ENCODE measurements at regions of chr21 and their contacts with region 1.

Region 1: GRCh38 chr21:33360881-33361602 is 36.3 kb downstream of the IFNAR1 start:
- DNase-seq: no peak
- ATAC-seq: peak; percentile 98
- H3K4me3 ChIP-seq: no peak overlapping the region
- H3K27ac ChIP-seq: no peak overlapping the region
- H3K4me1 ChIP-seq: peaks cover 10 to 15% of the 10 kb centered on the region in 2 experiments
- H3K27me3 ChIP-seq: no peaks in the 10 kb centered on the region
- CTCF ChIP-seq: peak in 2 of 3 experiments; percentile 91 to 95; a peak in 5 of 6 replicates
- POLR2A ChIP-seq: no peak
- RAD21 ChIP-seq: peak; percentile 46

Region 2: GRCh38 chr21:33324291-33325221 is 36.5 kb before region 1 on chr21 and contains the start of gene IFNAR1:
- CTCF ChIA-PET with region 1: interaction called, 17 read pairs
- POLR2A ChIA-PET with region 1: no interaction called
- RAD21 ChIA-PET with region 1: interaction called in 1 of 2 experiments, 5 read pairs
- intact Hi-C with region 1: no loop called
- DNase-seq: peak; percentile 94
- ATAC-seq: peak; percentile 95
- H3K4me3 ChIP-seq: peak within 1 kb of the TSS; percentile 92 to 98
- H3K27ac ChIP-seq: peak within 1 kb of the TSS; percentile 84
- H3K4me1 ChIP-seq: peaks cover 0 to 13% of the 10 kb centered on the region in 2 experiments; a peak in 1 of 4 replicates
- H3K27me3 ChIP-seq: no peaks in the 10 kb centered on the region
- CTCF ChIP-seq: no peak
- POLR2A ChIP-seq: peak; percentile 95
- RAD21 ChIP-seq: no peak
- total RNA-seq, gene IFNAR1: 20.5 TPM

Region 3: GRCh38 chr21:33348706-33349105 is 12.3 kb before region 1 on chr21:
- CTCF ChIA-PET with region 1: interaction called, 12 read pairs
- POLR2A ChIA-PET with region 1: no interaction called
- RAD21 ChIA-PET with region 1: no interaction called
- intact Hi-C with region 1: no loop called
- DNase-seq: no peak
- ATAC-seq: no peak
- H3K4me3 ChIP-seq: no peak overlapping the region
- H3K27ac ChIP-seq: no peak overlapping the region
- H3K4me1 ChIP-seq: no peaks in the 10 kb centered on the region
- H3K27me3 ChIP-seq: no peaks in the 10 kb centered on the region
- CTCF ChIP-seq: no peak
- POLR2A ChIP-seq: no peak
- RAD21 ChIP-seq: no peak

Region 4: GRCh38 chr21:33374450-33375096 is 13.5 kb after region 1 on chr21:
- CTCF ChIA-PET with region 1: interaction called, 12 read pairs
- POLR2A ChIA-PET with region 1: interaction called, 3 read pairs
- RAD21 ChIA-PET with region 1: no interaction called
- intact Hi-C with region 1: no loop called
- DNase-seq: peak; percentile 53
- ATAC-seq: peak; percentile 93
- H3K4me3 ChIP-seq: no peak overlapping the region
- H3K27ac ChIP-seq: no peak overlapping the region
- H3K4me1 ChIP-seq: peaks cover 15 to 26% of the 10 kb centered on the region in 2 experiments
- H3K27me3 ChIP-seq: no peaks in the 10 kb centered on the region
- CTCF ChIP-seq: peak in 2 of 3 experiments; percentile 68 to 82; a peak in 4 of 6 replicates
- POLR2A ChIP-seq: no peak
- RAD21 ChIP-seq: no peak

Region 5: GRCh38 chr21:33441489-33442477 is 80.7 kb after region 1 on chr21:
- CTCF ChIA-PET with region 1: interaction called, 20 read pairs
- POLR2A ChIA-PET with region 1: no interaction called
- RAD21 ChIA-PET with region 1: no interaction called
- intact Hi-C with region 1: loop called (anchors 2 kb)
- DNase-seq: no peak
- ATAC-seq: no peak
- H3K4me3 ChIP-seq: no peak overlapping the region
- H3K27ac ChIP-seq: no peak overlapping the region
- H3K4me1 ChIP-seq: peaks cover 3 to 5% of the 10 kb centered on the region in 2 experiments; a peak in 2 of 4 replicates
- H3K27me3 ChIP-seq: no peaks in the 10 kb centered on the region
- CTCF ChIP-seq: no peak
- POLR2A ChIP-seq: no peak
- RAD21 ChIP-seq: no peak

Region 6: GRCh38 chr21:33510826-33511225 is 149.8 kb after region 1 on chr21:
- CTCF ChIA-PET with region 1: no interaction called
- POLR2A ChIA-PET with region 1: no interaction called
- RAD21 ChIA-PET with region 1: no interaction called
- intact Hi-C with region 1: no loop called
- DNase-seq: no peak
- ATAC-seq: no peak
- H3K4me3 ChIP-seq: no peak overlapping the region
- H3K27ac ChIP-seq: no peak overlapping the region
- H3K4me1 ChIP-seq: no peaks in the 10 kb centered on the region
- H3K27me3 ChIP-seq: no peaks in the 10 kb centered on the region
- CTCF ChIP-seq: no peak
- POLR2A ChIP-seq: no peak
- RAD21 ChIP-seq: no peak

Region 7: GRCh38 chr21:34037009-34037795 is 676.2 kb after region 1 on chr21:
- CTCF ChIA-PET with region 1: no interaction called
- POLR2A ChIA-PET with region 1: no interaction called
- RAD21 ChIA-PET with region 1: no interaction called
- intact Hi-C with region 1: no loop called
- DNase-seq: no peak
- ATAC-seq: no peak
- H3K4me3 ChIP-seq: no peak overlapping the region
- H3K27ac ChIP-seq: no peak overlapping the region
- H3K4me1 ChIP-seq: peaks cover 2 to 15% of the 10 kb centered on the region in 2 experiments; a peak in 3 of 4 replicates
- H3K27me3 ChIP-seq: no peaks in the 10 kb centered on the region
- CTCF ChIP-seq: no peak
- POLR2A ChIP-seq: no peak
- RAD21 ChIP-seq: no peak